Activated CD8-positive, alpha-beta T cell treated with anti-CD3 and anti-CD28 coated beads for 36 hours (primary cell): ENCODE measurements at regions of chr5 and their contacts with region 1.

Region 1: DNA sequence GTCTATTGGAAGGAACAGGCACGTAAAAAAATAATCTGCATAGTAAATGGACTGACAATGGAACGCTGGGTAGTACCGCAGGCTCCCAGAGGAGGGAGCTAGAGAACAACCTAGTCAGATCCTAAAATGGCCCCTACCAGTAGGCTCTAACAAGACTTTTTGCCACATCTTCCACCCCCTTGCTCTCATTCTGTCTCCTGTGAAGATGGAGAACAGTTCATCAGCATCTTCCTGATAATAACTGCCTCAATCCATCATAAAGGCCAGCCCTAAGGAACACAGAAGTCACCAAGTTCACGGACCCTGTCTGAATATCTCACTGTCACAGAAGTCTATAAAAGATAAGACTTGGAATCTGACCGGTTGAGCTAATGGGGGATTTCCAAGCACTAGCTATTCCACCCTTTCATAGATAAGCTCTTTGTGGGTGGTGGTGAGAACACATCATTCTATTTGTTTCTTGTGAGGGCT is 133.4 kb downstream of the SLC1A3 start:
- DNase-seq: peak; percentile 90
- ATAC-seq: peak; percentile 95
- H3K4me3 Mint-ChIP-seq: no peak overlapping the region
- H3K27ac Mint-ChIP-seq: no peak overlapping the region
- H3K4me1 Mint-ChIP-seq: peaks cover 12% of the 10 kb centered on the region
- H3K27me3 Mint-ChIP-seq: peaks cover 27% of the 10 kb centered on the region
- CTCF ChIP-seq: peak; percentile 85

Region 2: DNA sequence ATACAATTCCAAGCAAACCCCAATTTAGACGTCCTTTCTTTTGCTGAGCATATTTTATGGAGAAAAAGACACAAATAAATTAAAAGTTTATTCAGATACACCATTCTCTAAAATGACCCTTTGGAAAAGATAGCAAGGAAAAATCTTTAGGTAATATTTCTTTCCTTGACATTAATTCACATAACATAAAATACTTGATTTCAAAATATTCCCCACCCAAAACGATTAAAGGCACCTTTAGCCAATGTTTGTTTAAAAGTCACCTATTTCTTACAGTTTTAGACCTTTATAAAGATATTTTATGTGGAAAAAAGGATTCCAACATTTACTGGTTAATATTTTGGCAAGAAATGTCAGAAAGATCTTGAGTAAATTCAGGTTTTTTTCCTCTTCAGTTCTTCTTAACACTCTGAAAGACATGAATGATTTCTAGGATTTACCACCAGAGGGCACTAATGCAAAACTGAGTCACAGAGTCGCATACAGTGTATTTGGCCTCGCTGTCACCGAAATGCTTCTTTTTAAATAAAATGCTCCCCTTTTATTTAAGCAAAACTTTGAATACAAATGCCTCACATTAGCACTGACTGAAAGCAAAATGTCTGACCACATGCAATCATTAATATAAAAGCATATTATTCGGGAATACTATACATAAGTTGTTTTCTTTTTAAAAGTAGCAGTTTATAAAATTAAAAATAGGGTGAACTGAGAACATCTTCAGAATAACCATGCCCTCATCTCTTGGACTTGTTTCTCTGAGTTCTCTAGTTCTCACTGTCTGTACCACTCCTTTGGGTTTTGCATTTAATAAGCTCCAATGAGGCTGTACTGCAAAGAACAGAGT is 10.9 kb before region 1 on chr5:
- CTCF ChIA-PET with region 1: interaction called, 34 read pairs
- POLR2A ChIA-PET with region 1: no interaction called
- intact Hi-C with region 1: no loop called
- DNase-seq: peak; percentile 39
- ATAC-seq: peak; percentile 59
- H3K4me3 Mint-ChIP-seq: no peak overlapping the region
- H3K27ac Mint-ChIP-seq: no peak overlapping the region
- H3K4me1 Mint-ChIP-seq: peaks cover 14% of the 10 kb centered on the region
- H3K27me3 Mint-ChIP-seq: peaks cover 7% of the 10 kb centered on the region
- CTCF ChIP-seq: peak; percentile 66

Region 3: DNA sequence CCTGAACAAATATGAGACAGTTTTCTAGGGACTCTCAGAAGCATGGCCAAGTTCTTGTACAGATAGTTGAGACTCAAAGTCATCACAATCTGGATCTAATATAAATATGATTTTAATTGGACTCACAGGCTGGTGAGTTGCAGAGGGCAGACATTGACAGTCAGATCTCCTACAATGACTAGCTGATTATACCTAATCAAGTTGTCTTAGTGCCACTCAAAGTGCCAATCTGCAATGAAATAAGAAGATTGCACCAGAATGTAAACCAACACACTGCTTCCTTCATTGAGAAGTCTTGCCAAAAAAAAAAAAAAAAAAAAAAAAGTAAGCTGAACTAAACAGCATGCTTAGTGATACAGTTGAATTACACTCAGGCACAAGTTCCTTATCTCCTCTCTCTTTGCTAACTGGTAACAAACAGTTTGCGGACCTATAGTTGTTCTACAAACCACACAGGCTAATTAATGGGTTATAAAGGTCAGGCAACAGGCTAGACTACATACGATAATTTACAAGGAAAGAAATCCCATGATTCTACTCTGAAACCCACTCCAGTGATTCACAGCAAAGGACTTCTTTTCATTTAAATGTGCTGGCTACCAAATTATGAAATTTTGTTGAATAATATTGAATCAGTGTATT is 29.5 kb after region 1 on chr5:
- CTCF ChIA-PET with region 1: interaction called, 10 read pairs
- POLR2A ChIA-PET with region 1: no interaction called
- intact Hi-C with region 1: no loop called
- DNase-seq: no peak
- ATAC-seq: no peak
- H3K4me3 Mint-ChIP-seq: no peak overlapping the region
- H3K27ac Mint-ChIP-seq: no peak overlapping the region
- H3K4me1 Mint-ChIP-seq: no peaks in the 10 kb centered on the region
- H3K27me3 Mint-ChIP-seq: peaks cover 6% of the 10 kb centered on the region
- CTCF ChIP-seq: no peak

Region 4: GRCh38 chr5:36870399-36871040 is 130.7 kb after region 1 on chr5:
- CTCF ChIA-PET with region 1: interaction called, 42 read pairs
- POLR2A ChIA-PET with region 1: interaction called, 3 read pairs
- intact Hi-C with region 1: loop called (anchors 1 kb)
- DNase-seq: no peak
- ATAC-seq: peak; percentile 85
- H3K4me3 Mint-ChIP-seq: no peak overlapping the region
- H3K27ac Mint-ChIP-seq: peak overlapping the region; percentile 76
- H3K4me1 Mint-ChIP-seq: peaks cover 36% of the 10 kb centered on the region
- H3K27me3 Mint-ChIP-seq: no peaks in the 10 kb centered on the region
- CTCF ChIP-seq: peak; percentile 70

Region 5: DNA sequence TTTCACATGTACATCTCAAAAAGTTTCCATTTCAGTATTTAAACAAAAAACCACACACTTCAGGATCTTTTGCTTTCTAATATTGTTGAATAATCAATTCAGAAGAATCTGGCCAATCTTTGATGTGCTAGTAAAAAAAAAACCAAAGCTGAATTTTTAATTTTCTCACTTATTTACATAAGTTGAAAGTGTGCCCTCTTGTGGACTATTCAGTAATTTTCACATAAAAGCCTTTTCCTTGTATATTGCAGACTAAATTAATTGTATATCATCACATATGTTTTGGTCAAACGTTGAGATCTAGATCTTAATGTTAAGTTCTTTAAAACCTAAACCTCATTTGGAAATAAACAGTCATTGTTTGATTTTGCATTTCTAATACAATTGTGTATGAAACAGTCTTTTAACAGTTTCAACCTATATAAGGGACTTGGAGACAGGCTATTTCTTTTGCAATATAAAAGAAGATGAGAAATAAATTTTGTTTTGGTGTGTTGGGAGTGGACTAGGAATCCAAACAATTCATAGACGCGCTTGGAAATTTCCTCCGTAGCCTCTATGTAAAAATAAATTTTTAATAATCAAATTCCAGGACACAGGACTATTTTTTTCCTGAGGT is 204.9 kb after region 1 on chr5:
- CTCF ChIA-PET with region 1: interaction called, 5 read pairs
- POLR2A ChIA-PET with region 1: no interaction called
- intact Hi-C with region 1: loop called (anchors 5 kb)
- DNase-seq: no peak
- ATAC-seq: no peak
- H3K4me3 Mint-ChIP-seq: no peak overlapping the region
- H3K27ac Mint-ChIP-seq: no peak overlapping the region
- H3K4me1 Mint-ChIP-seq: peaks cover 55% of the 10 kb centered on the region
- H3K27me3 Mint-ChIP-seq: no peaks in the 10 kb centered on the region
- CTCF ChIP-seq: peak; percentile 66

Region 6: GRCh38 chr5:37005946-37006540 is 266.3 kb after region 1 on chr5:
- CTCF ChIA-PET with region 1: interaction called, 8 read pairs
- POLR2A ChIA-PET with region 1: no interaction called
- intact Hi-C with region 1: loop called (anchors 5 kb)
- DNase-seq: no peak
- ATAC-seq: peak; percentile 45
- H3K4me3 Mint-ChIP-seq: no peak overlapping the region
- H3K27ac Mint-ChIP-seq: no peak overlapping the region
- H3K4me1 Mint-ChIP-seq: no peaks in the 10 kb centered on the region
- H3K27me3 Mint-ChIP-seq: no peaks in the 10 kb centered on the region
- CTCF ChIP-seq: peak; percentile 67